ENCODE measurements at regions of chr6 and their contacts with region 1.

Region 1: DNA sequence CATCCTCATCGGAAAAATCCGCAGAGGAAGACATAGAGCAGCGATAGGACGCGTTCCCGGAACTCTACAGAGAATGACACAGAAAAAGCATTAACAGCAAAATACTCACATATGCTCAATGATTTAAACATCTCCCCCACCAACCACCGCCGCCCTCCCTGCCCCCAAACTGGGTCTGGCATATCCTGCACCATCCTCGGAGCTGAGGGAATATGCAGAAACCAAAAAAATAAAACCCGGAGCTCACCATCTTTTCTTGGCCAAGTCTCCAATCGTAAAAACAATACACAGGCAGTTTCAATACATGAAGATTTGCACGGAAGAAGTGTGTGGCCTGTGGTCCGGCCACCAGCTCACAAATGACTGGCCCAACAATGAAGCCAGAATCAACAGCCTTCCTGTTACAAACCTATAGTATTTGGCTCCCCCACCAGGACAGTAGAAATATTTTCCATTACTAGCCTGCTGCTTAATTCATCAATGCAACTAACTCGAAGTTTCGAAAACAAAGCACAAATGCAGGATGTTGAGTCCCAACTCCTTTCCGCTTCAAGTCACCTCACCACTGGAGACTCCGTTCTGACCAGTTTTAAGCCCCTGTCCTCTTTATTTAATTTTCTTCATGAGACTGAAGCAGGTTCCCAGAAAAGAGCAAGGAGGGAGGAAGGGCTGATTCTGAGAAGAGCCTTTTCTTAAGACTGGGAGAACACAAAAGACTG is 103.2 kb upstream of the BEND6 start:
- DNase-seq: peak; percentile 73
- CTCF ChIP-seq: peak; percentile 67

Region 2: DNA sequence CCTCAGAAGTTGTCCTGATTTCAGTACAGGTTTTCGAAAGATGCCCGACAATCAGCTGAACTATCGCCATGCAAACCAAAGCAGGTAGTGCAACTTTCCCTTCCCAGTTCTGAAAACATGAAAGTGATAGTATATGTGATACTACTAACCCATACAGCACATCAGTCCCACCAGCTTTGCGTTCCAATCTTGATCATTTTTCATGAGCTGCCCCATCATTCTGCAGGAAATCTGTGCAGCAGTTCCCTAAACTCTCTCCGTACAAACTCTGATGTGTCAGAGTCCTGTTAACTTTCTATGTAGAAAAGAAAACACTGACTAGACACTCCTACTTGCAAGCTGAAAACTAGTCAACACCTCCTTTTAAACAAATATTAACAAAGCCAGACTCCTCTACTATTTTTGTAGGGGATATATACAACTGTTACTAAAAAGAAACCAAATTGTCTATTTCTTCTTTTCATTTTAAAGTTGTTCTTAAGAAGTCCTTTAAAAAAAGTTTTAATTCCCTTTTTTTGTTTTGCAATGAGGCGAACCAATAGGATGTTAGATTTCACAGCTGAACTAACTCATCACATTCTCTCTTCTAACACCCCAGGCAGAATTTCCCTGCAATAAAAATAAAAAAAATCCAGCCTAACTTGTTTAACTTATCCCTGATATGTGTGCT is 109.4 kb before region 1 on chr6:
- CTCF ChIA-PET with region 1: interaction called, 12 read pairs
- POLR2A ChIA-PET with region 1: interaction called, 3 read pairs
- DNase-seq: peak; percentile 18
- CTCF ChIP-seq: no peak

Region 3: DNA sequence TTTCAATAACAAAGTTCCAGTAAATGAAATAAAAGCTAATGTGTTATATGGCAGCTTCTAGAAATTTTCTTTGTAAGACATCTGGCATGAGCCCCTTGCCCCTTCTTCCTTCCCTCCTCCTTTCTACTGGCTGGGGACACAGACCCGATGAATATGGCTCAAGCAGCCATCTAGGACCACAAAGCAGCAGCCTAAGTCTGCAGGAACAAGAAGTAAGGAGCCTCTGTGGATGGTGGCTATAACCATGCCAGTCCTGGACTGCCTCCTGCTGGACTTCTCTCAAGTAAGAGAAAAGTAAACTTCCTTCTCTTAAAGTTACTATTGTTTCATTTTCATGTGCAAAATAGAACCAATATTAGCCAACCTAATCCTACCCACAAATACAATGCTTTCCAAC is 94.1 kb before region 1 on chr6:
- CTCF ChIA-PET with region 1: interaction called, 15 read pairs
- POLR2A ChIA-PET with region 1: no interaction called
- DNase-seq: no peak
- CTCF ChIP-seq: peak; percentile 36

Region 4: GRCh38 chr6:56764081-56764566 is 87.6 kb before region 1 on chr6:
- CTCF ChIA-PET with region 1: interaction called, 17 read pairs
- POLR2A ChIA-PET with region 1: no interaction called
- DNase-seq: peak; percentile 40
- CTCF ChIP-seq: no peak

Region 5: DNA sequence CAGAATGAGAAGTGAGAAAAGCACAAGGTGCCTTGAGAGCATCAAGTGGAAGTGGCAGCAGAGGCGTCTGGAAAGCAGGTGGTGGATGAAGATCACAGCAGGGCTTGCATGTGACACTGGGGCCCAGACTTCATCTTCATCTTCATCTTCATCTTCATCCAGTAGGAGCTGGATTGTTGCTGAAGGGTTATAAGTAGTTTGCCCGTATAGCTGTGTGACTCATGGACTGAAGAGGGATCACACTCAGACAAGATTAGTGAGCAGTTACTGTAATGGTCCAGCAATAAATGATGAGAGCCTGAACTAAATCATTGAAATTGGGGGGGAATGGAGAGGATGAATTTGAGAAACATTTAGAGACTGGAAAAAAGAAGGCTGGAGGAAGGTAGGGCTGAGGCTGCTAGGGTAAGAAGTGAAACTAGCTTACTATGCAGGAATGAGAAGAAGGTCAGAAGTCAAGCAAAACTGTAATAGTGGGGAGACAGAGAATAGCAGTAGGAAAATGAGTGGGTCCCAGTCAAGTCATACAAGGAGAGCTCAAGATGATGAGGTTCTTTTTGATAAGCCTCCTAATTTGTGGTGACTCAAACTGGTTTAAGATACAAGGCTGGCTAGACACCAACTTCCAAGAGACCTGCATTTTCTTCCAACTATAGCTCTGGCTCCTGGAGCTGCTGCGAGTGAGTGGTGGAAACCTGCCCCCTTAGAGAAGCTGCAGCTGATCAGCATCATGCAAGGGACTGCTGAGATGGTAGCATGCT is 10.9 kb after region 1 on chr6:
- CTCF ChIA-PET with region 1: interaction called, 109 read pairs
- POLR2A ChIA-PET with region 1: no interaction called
- DNase-seq: no peak
- CTCF ChIP-seq: no peak

Measured in GM10248 (cell line).